Aorta (tissue), 5 donors: ENCODE measurements at regions of chr19 and their contacts with region 1.

Region 1: DNA sequence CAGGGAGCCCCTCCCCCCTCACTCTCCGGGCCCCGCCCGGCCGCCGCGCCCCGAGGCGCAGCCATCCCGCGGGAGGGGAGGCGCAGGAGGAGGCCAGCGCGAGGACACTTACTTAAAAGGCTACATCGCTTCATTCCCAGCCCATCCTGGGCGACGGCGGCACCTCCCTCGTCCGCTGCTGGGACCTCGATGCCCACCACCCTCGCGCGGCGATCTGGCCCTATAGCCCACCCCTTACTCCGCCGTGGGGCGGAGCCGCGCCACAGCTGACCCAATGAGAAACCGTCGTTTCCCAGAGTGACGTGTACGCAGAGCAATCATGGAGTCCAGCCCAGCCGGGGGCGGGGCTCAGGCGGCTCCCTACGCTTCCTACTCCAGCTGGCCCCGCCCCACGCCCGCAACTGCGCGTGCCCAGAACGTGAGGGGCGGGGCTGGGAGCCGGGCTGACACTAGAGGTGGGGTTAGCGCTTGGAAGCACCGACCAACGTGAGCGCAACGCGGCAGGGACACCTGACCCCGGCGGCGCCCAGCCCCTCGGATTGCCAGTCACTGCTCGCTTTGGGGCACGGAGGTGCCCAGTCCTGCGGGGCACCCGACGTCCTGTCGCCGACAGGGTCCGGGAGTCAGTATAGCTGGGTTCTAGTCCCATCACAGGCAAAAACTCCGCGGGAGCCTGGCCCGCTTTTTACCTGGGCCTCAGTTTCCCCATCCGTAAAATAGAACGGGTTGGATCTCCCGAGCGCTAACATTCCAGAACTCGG is at the start of gene ANKRD27:
- DNase-seq: peak; percentile 99
- ATAC-seq: peak; percentile 99
- H3K4me3 ChIP-seq: peak within 1 kb of the TSS; percentile 66 to 68
- H3K27ac ChIP-seq: peak within 1 kb of the TSS in 1 of 2 donors; percentile 49
- H3K4me1 ChIP-seq: no peaks in the 10 kb centered on the region
- H3K27me3 ChIP-seq: no peaks in the 10 kb centered on the region
- total RNA-seq, gene ANKRD27: 28.8 to 30.9 TPM

Region 2: DNA sequence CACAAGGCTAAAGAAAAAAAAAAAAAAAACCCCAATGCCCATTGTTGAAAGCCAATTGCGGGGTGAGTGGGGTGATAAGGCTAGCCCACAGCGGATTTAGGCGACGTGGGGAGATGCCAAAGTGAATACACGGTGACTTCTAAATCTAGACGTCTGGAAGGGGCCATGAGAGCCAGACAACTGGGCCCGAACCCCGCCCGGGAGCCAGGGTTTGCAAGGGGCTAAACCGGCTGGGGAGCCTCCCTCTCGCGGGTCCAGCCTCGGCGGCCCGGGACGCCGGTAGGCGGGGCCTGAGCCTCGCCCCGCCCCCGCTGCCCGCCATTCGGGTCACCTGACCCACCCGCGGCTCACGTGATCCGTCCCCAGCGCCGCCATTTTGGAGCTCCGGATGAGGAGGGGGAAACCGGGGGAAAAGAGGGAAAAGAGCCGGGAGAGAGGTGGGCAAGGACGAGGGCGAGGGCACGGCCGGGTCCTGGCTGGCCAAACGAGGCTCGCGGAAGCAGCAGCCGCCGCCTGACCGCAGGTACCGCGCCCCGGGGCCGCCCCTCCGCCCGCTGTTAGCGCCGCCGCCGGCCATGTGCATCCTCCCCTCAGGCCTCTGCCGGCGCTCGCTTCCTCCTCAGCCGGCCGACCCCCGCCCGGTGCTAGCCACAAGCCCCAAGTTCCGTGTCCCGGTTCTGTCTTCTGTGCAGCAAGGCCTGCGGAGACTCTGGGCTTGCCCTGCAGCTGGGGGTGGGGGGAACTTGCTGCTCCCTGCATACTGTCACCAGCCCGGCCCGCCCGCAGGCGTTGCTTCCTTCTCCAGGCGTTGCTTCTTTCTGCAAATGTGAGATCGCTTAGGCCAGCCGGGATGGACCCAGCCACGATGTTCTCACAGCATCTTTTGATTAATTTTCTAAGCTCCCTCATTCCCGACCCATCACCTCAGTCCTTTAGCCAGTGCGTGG is 329.6 kb before region 1 on chr19 and contains the start of gene ZNF507:
- intact Hi-C with region 1: loop called in 1 of 2 experiments (anchors 10 kb)
- DNase-seq: peak; percentile 85 to 95
- ATAC-seq: peak; percentile 96
- H3K4me3 ChIP-seq: peak within 1 kb of the TSS; percentile 76 to 100
- H3K27ac ChIP-seq: peak within 1 kb of the TSS; percentile 37 to 47
- H3K4me1 ChIP-seq: peaks cover 0 to 5% of the 10 kb centered on the region in 2 donors
- H3K27me3 ChIP-seq: no peaks in the 10 kb centered on the region
- total RNA-seq, gene ZNF507: 23.2 to 25.1 TPM

Region 3: GRCh38 chr19:32691291-32691951 is 16.3 kb after region 1 on chr19 and contains the start of gene NUDT19:
- intact Hi-C with region 1: loop called in 1 of 2 experiments (anchors 2 kb)
- DNase-seq: peak; percentile 92 to 94
- ATAC-seq: peak; percentile 97
- H3K4me3 ChIP-seq: peak within 1 kb of the TSS; percentile 76 to 81
- H3K27ac ChIP-seq: peak within 1 kb of the TSS; percentile 58 to 69
- H3K4me1 ChIP-seq: no peaks in the 10 kb centered on the region
- H3K27me3 ChIP-seq: no peaks in the 10 kb centered on the region
- total RNA-seq, gene NUDT19: 5.4 to 6.6 TPM

Region 4: GRCh38 chr19:32708457-32708856 is 33.3 kb after region 1 on chr19:
- intact Hi-C with region 1: no loop called
- DNase-seq: no peak
- ATAC-seq: no peak
- H3K4me3 ChIP-seq: no peak overlapping the region
- H3K27ac ChIP-seq: no peak overlapping the region
- H3K4me1 ChIP-seq: no peaks in the 10 kb centered on the region
- H3K27me3 ChIP-seq: no peaks in the 10 kb centered on the region

Region 5: GRCh38 chr19:32809254-32809653 is 134.1 kb after region 1 on chr19:
- intact Hi-C with region 1: no loop called
- DNase-seq: peak in 1 of 2 donors; percentile 53
- ATAC-seq: no peak
- H3K4me3 ChIP-seq: no peak overlapping the region
- H3K27ac ChIP-seq: no peak overlapping the region
- H3K4me1 ChIP-seq: no peaks in the 10 kb centered on the region
- H3K27me3 ChIP-seq: no peaks in the 10 kb centered on the region